ENCODE measurements at regions of chr7 and their contacts with region 1.

Region 1: GRCh38 chr7:32891800-32892520 is 400 bp upstream of the KBTBD2 start:
- DNase-seq: peak; percentile 98
- H3K4me3 Mint-ChIP-seq: peak overlapping the region; percentile 90
- H3K27ac Mint-ChIP-seq: peak overlapping the region; percentile 95
- H3K4me1 Mint-ChIP-seq: peaks cover 61% of the 10 kb centered on the region
- H3K27me3 Mint-ChIP-seq: peaks cover 2% of the 10 kb centered on the region

Region 2: DNA sequence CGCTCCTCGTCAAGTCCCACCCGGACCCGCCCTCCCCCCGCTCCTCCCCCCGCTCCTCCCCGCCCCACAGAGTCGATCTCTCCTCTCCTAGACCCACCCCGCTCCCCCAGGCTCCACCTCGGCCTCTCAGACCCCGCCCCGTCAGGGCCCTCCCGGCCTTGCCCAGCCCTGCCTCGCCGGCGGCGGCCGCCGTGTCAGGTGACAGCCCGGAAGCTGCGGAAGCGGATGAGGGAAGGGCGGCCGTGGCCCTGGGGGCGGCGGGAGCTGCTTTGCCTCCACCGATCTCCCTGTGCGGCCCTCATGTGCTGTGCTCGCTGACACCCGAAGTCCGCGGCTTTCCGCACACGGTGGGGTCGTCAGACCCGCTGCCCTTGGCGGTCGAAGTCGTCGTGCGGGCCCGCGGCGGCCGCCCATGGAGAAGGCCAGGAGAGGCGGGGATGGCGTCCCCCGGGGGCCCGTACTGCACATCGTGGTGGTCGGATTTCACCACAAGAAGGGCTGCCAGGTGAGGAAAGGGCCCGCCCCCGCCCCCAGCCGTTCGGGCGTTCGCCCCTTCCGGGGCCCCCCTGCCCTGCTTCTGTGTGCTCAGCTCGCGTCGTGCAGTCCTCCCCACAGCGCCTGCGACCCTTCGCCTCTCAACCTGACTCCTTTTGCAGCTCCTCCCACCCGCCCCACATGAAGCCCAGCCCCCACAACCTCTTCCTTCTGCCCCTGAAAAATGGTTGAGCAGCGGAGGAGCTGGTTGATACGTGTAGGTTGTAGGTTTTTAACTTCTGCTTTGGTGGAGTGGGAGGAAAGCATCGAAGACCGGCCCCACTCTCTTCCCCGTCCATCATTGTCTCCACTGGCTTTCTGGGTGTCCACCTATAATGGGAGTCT is 396.4 kb before region 1 on chr7 and contains the start of gene AVL9:
- intact Hi-C with region 1: loop called (anchors 1 kb)
- DNase-seq: peak; percentile 99
- H3K4me3 Mint-ChIP-seq: peak within 1 kb of the TSS; percentile 93
- H3K27ac Mint-ChIP-seq: peak within 1 kb of the TSS; percentile 98
- H3K4me1 Mint-ChIP-seq: peaks cover 32% of the 10 kb centered on the region
- H3K27me3 Mint-ChIP-seq: no peaks in the 10 kb centered on the region
- total RNA-seq, gene AVL9: 46.7 and 50.6 TPM in 2 replicates

Region 3: GRCh38 chr7:32871624-32872371 is 20.2 kb before region 1 on chr7:
- intact Hi-C with region 1: loop called (anchors 1 kb)
- DNase-seq: no peak
- H3K4me3 Mint-ChIP-seq: no peak overlapping the region
- H3K27ac Mint-ChIP-seq: peak overlapping the region; percentile 40
- H3K4me1 Mint-ChIP-seq: peaks cover 28% of the 10 kb centered on the region
- H3K27me3 Mint-ChIP-seq: no peaks in the 10 kb centered on the region

Region 4: DNA sequence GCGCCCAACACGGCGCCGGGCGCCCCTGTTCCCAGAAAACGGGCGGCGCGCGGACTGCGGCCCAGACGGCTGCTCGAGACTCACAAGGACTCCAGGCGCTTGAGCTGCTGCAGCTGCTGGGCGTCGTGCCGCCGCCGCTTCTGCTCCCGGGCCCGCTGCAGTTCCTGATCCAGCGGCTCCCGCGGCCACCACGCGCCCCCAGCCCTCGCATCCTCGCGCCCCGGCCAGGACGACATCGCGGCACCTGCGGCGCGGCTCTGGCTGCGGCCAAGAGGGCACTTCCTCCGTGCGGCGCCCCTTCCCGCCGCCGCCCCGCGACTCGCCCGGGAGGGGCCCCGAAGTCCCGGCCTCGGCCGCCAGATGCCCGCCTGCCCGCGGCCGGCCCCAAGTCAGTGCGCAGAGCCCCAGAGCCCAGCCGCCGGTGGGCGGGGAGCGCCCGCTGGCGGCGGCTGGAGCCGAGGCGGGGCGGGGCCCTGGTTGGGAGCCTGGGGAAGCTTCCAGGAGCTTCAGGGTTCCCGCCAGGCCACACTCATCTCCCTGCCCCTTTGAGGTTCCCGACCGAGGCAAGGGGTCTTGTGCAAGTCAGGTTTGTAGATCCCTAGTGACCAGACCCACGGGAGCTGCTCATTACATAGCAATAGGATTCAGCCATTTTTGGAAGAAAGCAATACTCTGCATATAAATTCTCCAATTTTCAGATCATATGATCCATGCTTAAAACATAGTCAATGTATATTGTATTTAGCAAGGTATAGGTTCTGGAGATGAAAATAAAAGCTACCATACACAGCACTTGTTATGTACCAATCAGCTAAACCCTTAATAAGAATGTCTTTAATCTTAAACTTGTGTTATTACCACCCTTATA is 51.1 kb after region 1 on chr7:
- intact Hi-C with region 1: loop called (anchors 1 kb)
- DNase-seq: peak; percentile 65
- H3K4me3 Mint-ChIP-seq: peak overlapping the region; percentile 91
- H3K27ac Mint-ChIP-seq: peak overlapping the region; percentile 76
- H3K4me1 Mint-ChIP-seq: peaks cover 29% of the 10 kb centered on the region
- H3K27me3 Mint-ChIP-seq: peaks cover 10% of the 10 kb centered on the region

Region 5: DNA sequence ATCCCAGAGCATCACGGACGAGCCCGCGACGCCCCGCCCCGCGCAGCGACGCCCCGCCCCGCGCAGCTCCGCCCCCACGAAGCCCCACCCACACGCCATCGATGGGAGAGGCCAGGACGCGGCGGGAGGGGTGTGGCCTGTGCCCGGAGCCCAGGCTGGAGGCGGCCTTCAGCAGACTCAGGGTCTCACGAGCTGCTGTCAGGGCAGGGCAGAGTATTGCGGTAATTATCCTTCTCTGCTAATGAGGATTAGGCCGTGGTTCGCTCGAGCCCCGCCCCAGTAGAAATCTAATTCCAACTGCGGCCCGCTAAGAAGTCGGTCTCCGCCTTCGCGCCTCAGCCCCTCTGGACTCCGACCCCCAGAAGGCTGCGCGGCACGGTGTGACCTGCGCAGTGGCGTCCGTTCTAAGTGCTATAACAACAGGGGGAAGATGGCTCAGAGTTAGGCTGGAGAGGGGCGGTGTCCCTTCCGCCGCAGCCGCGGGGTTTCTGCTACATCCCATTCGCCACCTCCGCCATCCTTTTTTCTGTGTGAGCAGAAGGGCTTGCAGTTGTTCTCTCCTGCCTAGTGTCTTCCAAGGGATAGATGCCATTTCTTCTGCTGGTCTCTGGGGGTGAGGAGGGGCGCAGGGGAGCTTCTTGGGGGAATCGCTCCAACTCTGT is 171.0 kb after region 1 on chr7:
- intact Hi-C with region 1: loop called (anchors 1 kb)
- DNase-seq: peak; percentile 88
- H3K4me3 Mint-ChIP-seq: peak overlapping the region; percentile 97
- H3K27ac Mint-ChIP-seq: peak overlapping the region; percentile 96
- H3K4me1 Mint-ChIP-seq: peaks cover 38% of the 10 kb centered on the region
- H3K27me3 Mint-ChIP-seq: peaks cover 9% of the 10 kb centered on the region